Activated CD4-positive, alpha-beta T cell treated with anti-CD3 and anti-CD28 coated beads for 36 hours (primary cell): ENCODE measurements at regions of chr18 and their contacts with region 1.

Region 1: GRCh38 chr18:34299828-34300227 is 75.1 kb upstream of the NOL4 start:
- DNase-seq: no peak
- ATAC-seq: no peak
- H3K4me3 Mint-ChIP-seq: no peak overlapping the region
- H3K27ac Mint-ChIP-seq: no peak overlapping the region
- H3K4me1 Mint-ChIP-seq: no peaks in the 10 kb centered on the region
- H3K27me3 Mint-ChIP-seq: no peaks in the 10 kb centered on the region

Region 2: GRCh38 chr18:34242740-34243139 is 57.1 kb before region 1 on chr18:
- CTCF ChIA-PET with region 1: no interaction called
- POLR2A ChIA-PET with region 1: no interaction called
- intact Hi-C with region 1: loop called in 1 of 2 experiments (anchors 10 kb)
- DNase-seq: no peak
- ATAC-seq: no peak
- H3K4me3 Mint-ChIP-seq: no peak overlapping the region
- H3K27ac Mint-ChIP-seq: no peak overlapping the region
- H3K4me1 Mint-ChIP-seq: no peaks in the 10 kb centered on the region
- H3K27me3 Mint-ChIP-seq: no peaks in the 10 kb centered on the region

Region 3: DNA sequence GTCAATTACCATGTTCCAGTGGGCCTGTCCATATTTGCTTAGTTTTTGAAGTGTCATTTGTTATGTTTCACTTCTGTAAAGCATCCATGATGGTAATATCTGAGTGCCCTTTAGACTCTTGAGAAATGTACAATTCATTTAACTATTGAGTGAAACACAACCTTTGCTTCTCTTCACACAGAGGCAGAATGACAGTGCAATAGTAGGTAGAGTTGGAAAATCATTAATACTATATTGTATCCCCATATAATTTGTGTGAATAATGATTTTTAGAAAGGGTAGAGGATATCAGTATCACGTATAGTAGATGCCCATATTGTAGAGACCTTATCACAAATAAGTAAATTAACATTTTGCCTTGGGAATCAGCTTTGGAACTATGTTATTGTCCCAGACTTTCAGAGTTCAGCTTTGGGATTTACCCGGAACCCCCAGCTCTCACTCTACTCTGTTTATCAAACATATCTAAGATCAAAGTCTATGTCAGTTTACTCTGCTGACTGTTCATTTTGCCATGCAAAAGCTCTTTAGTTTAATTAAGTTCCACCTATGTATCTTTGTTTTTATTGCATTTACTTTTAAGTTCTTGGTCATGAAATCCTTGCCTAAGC is 97.6 kb after region 1 on chr18:
- CTCF ChIA-PET with region 1: no interaction called
- POLR2A ChIA-PET with region 1: no interaction called
- intact Hi-C with region 1: no loop called
- DNase-seq: no peak
- ATAC-seq: no peak
- H3K4me3 Mint-ChIP-seq: no peak overlapping the region
- H3K27ac Mint-ChIP-seq: no peak overlapping the region
- H3K4me1 Mint-ChIP-seq: no peaks in the 10 kb centered on the region
- H3K27me3 Mint-ChIP-seq: no peaks in the 10 kb centered on the region